ENCODE measurements at regions of chr21 and their contacts with region 1.

Region 1: GRCh38 chr21:20667931-20668330 is 330.3 kb upstream of the NCAM2 start:
- DNase-seq: no peak
- H3K4me3 ChIP-seq: no peak overlapping the region
- H3K27ac ChIP-seq: no peak overlapping the region
- H3K4me1 ChIP-seq: no peaks in the 10 kb centered on the region
- H3K27me3 ChIP-seq: no peaks in the 10 kb centered on the region
- CTCF ChIP-seq: no peak
- POLR2A ChIP-seq: no peak

Region 2: DNA sequence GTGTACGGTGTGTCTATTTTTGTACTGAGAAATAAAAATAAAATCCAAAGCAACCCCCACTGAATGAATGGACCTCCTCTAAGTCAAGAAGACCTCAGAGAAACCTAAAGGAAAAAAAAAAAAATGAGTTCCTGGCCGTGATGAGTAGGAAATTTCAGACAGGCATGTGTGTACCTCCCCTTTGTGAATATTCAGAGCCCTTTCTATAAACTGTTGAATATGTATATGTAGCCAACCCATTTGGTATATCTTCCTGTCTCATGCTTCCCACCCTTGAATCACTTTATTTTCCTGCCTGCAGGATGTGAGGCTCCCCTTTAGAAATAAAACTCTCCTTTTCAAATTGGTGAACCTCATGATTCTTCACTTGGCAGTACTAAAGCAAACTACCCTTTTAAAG is 557.6 kb before region 1 on chr21:
- intact Hi-C with region 1: loop called (anchors 10 kb)
- DNase-seq: no peak
- H3K4me3 ChIP-seq: no peak overlapping the region
- H3K27ac ChIP-seq: no peak overlapping the region
- H3K4me1 ChIP-seq: no peaks in the 10 kb centered on the region
- H3K27me3 ChIP-seq: no peaks in the 10 kb centered on the region
- CTCF ChIP-seq: no peak
- POLR2A ChIP-seq: no peak

Region 3: DNA sequence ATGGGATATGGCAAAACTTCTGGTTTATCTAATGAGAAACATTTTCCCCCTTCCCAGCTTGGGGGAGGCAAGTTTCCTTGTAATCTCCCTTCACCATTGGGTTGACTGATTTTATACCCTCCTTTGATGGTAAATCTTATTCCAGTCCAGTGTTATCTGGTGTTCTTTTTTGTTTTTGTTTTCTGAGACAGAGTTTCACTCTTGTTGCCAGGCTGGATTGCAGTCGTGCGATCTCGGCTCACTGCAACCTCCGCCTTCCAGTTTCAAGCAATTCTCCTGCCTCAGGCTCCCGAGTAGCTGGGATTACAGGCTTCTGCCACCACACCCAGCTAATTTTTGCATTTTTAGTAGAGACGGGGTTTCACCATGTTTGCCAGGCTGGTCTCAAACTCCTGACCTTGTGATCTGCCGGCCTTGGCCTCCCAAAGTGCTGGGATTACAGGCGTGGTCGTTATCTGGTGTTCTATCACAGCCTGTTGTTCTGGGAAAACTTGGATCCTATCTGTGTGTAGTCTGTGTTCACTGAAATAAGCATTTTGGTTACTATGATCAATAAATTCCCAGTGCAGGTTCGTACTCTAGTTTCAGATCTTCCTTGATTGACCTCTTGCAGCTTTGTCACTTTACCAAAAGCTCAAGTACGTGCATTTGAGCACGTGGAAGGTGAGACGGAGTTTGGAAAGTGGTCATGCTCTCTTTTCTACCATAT is 611.4 kb after region 1 on chr21:
- intact Hi-C with region 1: no loop called
- DNase-seq: no peak
- H3K4me3 ChIP-seq: no peak overlapping the region
- H3K27ac ChIP-seq: no peak overlapping the region
- H3K4me1 ChIP-seq: no peaks in the 10 kb centered on the region
- H3K27me3 ChIP-seq: no peaks in the 10 kb centered on the region
- CTCF ChIP-seq: no peak
- POLR2A ChIP-seq: no peak